ENCODE measurements at regions of chr16 and their contacts with region 1.

Region 1: DNA sequence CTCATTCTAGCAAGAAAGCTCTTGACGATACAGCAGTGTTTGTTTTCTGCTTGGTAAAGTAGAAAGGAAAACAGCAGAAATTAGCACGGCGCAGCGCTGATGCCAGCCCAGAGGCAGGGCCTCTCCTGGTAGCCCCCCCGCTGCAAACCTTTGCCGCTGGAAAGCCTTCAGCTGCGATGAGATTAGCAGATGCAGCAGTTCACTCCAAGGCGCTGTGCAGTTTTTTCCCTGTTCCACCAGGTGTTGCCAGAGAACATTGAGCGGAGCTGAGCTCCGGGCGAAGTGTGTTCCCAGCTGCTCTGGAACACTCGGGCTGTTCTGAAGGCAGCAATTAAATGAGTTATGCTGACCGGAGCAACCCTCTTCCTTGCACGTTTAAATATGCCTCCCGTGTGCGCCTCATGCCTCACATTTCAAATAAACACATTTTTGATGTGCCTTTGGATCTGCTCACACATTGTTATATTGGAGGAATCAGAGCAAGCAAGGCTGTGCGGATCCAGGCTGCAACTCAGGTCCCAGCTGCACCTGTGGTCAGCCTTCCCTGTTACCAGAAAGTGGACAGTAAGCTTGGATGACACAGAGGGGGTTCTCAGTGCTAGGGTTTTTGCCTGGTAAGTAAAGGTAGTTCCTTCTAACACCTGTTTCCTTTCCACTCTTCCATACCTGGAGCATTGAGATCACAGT is 72.7 kb downstream of the RBFOX1 start:
- DNase-seq: peak; percentile 38 to 79
- ATAC-seq: peak; percentile 89 to 95 (median 92)
- H3K4me3 ChIP-seq: peak overlapping the region; percentile 10
- H3K27ac ChIP-seq: peak overlapping the region; percentile 56
- H3K4me1 ChIP-seq: peaks cover 50% of the 10 kb centered on the region
- H3K27me3 ChIP-seq: no peaks in the 10 kb centered on the region
- CTCF ChIP-seq: peak; percentile 51

Region 2: GRCh38 chr16:7268182-7268581 is 137.1 kb before region 1 on chr16:
- intact Hi-C with region 1: loop called in 1 of 2 experiments (anchors 10 kb)
- DNase-seq: no peak
- ATAC-seq: peak; percentile 60 to 78 (median 72)
- H3K4me3 ChIP-seq: no peak overlapping the region
- H3K27ac ChIP-seq: peak overlapping the region; percentile 76
- H3K4me1 ChIP-seq: peaks cover 36% of the 10 kb centered on the region
- H3K27me3 ChIP-seq: no peaks in the 10 kb centered on the region
- CTCF ChIP-seq: peak; percentile 78

Region 3: GRCh38 chr16:7602291-7602950 is 197.1 kb after region 1 on chr16:
- intact Hi-C with region 1: loop called in 1 of 2 experiments (anchors 10 kb)
- DNase-seq: no peak
- ATAC-seq: no peak
- H3K4me3 ChIP-seq: no peak overlapping the region
- H3K27ac ChIP-seq: peak overlapping the region; percentile 38
- H3K4me1 ChIP-seq: peaks cover 44% of the 10 kb centered on the region
- H3K27me3 ChIP-seq: no peaks in the 10 kb centered on the region
- CTCF ChIP-seq: no peak